Heart right ventricle (tissue), 16 donors: ENCODE measurements at regions of chr1 and their contacts with region 1.

Region 1: GRCh38 chr1:201481761-201482493 is 12.9 kb upstream of the PHLDA3 start:
- DNase-seq: peak; percentile 90
- ATAC-seq: peak; percentile 80 to 94 (median 90)
- H3K4me3 ChIP-seq: peak overlapping the region in 8 of 10 donors; percentile 14 to 57 (median 42)
- H3K27ac ChIP-seq: peak overlapping the region in 9 of 10 donors; percentile 0 to 81 (median 75)
- H3K4me1 ChIP-seq: peaks cover 9 to 48% (median 36%) of the 10 kb centered on the region in 9 donors
- H3K27me3 ChIP-seq: peaks cover 0 to 6% (median 0%) of the 10 kb centered on the region in 7 donors
- CTCF ChIP-seq: peak; percentile 90 to 98 (median 95)

Region 2: GRCh38 chr1:201348211-201348566 is 133.7 kb before region 1 on chr1:
- intact Hi-C with region 1: loop called in 1 of 10 experiments (anchors 5 kb)
- DNase-seq: no peak
- ATAC-seq: peak in 7 of 8 donors; percentile 5 to 59 (median 48)
- H3K4me3 ChIP-seq: no peak overlapping the region
- H3K27ac ChIP-seq: no peak overlapping the region
- H3K4me1 ChIP-seq: peaks cover 0 to 12% (median 3%) of the 10 kb centered on the region in 9 donors
- H3K27me3 ChIP-seq: peaks cover 0 to 8% (median 0%) of the 10 kb centered on the region in 7 donors
- CTCF ChIP-seq: peak; percentile 33 to 61 (median 50)

Region 3: DNA sequence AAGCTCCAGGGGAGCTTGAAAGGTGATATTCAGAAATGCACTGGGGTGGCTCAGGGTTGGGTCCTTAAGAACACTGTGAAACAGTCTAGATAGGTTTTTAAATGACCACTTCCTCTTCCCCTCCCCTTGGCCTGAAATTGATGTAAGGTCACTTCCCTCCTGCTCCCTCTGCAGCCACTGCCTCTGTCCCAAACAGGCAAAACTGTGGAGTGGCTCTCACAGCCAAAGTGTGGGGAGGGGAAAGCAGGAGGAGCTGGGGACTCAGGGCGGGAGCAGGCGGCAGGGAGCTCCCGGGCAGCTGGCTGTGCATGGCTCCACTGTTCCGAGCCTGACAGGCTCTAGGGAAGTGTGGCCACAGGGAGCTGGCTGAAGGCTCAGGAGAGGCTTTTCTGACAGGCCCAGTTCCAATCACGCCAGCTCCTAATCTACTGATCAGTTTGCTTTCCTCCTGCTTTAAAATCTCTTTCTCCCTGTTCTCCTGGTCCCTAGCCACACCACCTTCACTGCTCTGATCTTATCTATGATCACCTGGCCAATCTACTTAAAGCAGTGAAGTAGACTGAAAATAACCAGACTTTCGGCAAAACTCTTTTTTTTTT is 30.1 kb after region 1 on chr1:
- intact Hi-C with region 1: loop called (anchors 1 to 5 kb)
- DNase-seq: peak; percentile 76 to 80
- ATAC-seq: peak; percentile 67 to 88 (median 81)
- H3K4me3 ChIP-seq: peak overlapping the region in 2 of 10 donors; percentile 4 to 10
- H3K27ac ChIP-seq: peak overlapping the region; percentile 49 to 88 (median 77)
- H3K4me1 ChIP-seq: peaks cover 7 to 41% (median 33%) of the 10 kb centered on the region in 9 donors
- H3K27me3 ChIP-seq: no peaks in the 10 kb centered on the region
- CTCF ChIP-seq: peak in 1 of 9 donors; percentile 12